ENCODE measurements at regions of chr2 and their contacts with region 1.

Region 1: DNA sequence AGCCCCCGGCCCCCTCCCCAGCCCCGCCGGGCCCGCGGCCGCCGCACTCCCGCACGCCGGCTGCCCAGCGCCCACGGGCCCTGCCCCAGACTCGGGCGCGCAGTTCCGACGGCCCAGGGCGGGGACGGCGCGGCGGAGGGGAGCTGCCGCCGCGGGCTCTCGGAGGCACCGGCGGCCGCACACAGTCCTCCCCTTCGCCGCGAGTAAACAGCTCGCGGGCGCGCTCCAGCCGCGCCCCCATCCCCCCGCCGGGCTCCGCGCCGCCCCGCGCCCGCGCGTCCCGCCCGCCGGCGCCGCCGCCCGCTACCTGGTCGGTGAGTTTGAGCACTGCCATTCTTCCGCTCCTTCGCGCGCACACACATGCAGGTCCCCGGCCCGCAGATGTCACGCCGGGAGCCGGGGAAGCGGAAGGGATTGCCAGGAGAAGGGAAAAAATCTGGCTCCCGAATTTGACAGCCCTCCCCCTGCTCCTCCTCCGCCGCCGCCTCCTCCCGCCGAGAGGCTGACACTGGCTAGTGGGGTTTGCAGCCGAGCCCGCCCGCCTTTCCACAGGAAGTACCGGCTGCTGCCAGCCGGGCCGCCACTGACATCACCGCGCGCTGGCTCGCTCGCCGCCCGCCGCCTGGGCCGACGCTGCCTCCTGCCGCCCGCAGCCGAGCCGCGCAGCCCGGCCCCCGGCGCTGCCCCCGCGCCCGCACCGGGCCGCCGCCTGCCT is at the start of gene ANKRD44:
- DNase-seq: peak; percentile 83 to 95 (median 88)
- ATAC-seq: peak; percentile 75 to 80
- H3K4me3 Mint-ChIP-seq: peak within 1 kb of the TSS; percentile 92 to 99 (median 96)
- H3K27ac Mint-ChIP-seq: peak within 1 kb of the TSS; percentile 93 to 98 (median 96)
- H3K4me1 Mint-ChIP-seq: peaks cover 34 to 67% (median 61%) of the 10 kb centered on the region in 4 donors
- H3K27me3 Mint-ChIP-seq: no peaks in the 10 kb centered on the region
- polyA plus RNA-seq, gene ANKRD44: 85.8 to 96.1 (median 94.2) TPM

Region 2: DNA sequence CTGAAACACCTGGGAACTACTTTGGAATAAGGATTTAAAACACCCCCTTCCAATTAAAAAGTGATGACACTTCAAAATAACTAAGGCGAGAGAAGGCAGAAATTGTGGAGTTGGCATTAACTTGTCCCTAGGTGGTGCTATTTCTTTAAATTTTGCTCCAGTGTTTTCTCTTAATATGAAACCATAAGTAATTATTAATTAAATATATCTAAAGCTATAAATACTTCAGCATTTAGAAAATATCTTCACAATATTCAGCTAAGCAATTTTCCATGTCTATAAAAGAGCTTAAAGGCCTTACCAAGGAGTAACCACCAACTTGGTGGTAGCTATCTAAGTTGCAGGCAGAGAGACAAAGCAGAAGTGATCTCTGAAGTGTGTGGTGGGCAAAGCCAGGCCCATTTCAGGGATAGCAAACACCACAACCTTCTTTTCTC is 197.1 kb before region 1 on chr2:
- POLR2A ChIA-PET with region 1: interaction called, 10 read pairs
- DNase-seq: peak in 3 of 10 donors; percentile 43 to 51 (median 50)
- ATAC-seq: peak; percentile 33 to 39
- H3K4me3 Mint-ChIP-seq: no peak overlapping the region
- H3K27ac Mint-ChIP-seq: peak overlapping the region in 9 of 10 donors; percentile 39 to 96 (median 80)
- H3K4me1 Mint-ChIP-seq: peaks cover 26 to 47% (median 40%) of the 10 kb centered on the region in 4 donors
- H3K27me3 Mint-ChIP-seq: no peaks in the 10 kb centered on the region

Region 3: DNA sequence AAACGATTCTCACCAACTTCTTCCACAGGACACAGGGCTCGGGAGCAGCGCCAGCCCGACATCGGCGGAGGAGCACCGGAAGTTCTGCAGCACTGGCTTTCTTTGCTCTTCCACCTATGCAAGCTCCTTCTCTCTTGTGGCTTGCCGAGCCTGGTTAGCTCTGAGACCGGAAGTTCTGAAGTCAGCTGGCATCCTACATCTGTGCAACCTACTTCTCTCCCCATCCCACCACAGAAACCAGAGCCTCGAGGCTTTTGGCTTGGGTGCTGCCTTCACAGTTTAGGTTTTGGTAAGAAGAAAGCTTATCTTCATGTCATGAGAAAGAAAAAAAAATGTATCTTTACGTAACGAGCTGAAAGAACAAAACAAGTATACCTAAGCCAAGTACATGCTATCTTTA is 111.5 kb before region 1 on chr2:
- POLR2A ChIA-PET with region 1: interaction called, 582 read pairs
- DNase-seq: peak; percentile 63 to 98 (median 93)
- ATAC-seq: peak; percentile 79 to 89
- H3K4me3 Mint-ChIP-seq: peak overlapping the region; percentile 86 to 98 (median 94)
- H3K27ac Mint-ChIP-seq: peak overlapping the region; percentile 96 to 100 (median 98)
- H3K4me1 Mint-ChIP-seq: peaks cover 42 to 96% (median 92%) of the 10 kb centered on the region in 4 donors
- H3K27me3 Mint-ChIP-seq: peaks cover 0 to 2% (median 0%) of the 10 kb centered on the region in 5 donors

Region 4: DNA sequence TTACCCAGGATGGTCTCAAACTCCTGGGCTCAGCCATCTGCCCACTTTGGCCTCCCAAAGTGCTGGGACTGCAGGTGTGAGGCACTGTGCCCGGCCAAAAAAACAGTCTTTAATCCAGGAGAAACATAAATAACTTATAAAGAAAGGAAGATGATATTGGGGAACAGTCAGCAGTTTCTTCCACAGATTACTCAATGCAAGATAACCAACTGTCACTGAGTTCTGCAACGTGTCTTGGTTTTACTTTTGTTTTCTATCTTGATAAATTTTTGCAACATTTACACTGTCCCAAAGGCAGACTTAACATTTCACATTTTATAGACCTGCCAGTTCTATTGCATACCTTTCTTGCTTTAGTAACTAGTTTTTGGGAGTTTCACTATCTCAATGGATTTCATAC is 71.0 kb before region 1 on chr2:
- POLR2A ChIA-PET with region 1: interaction called, 48 read pairs
- DNase-seq: peak in 1 of 10 donors; percentile 40
- ATAC-seq: peak in 1 of 2 donors; percentile 22
- H3K4me3 Mint-ChIP-seq: peak overlapping the region; percentile 73 to 90 (median 86)
- H3K27ac Mint-ChIP-seq: peak overlapping the region; percentile 77 to 100 (median 94)
- H3K4me1 Mint-ChIP-seq: peaks cover 49 to 96% (median 84%) of the 10 kb centered on the region in 4 donors
- H3K27me3 Mint-ChIP-seq: no peaks in the 10 kb centered on the region

Region 5: DNA sequence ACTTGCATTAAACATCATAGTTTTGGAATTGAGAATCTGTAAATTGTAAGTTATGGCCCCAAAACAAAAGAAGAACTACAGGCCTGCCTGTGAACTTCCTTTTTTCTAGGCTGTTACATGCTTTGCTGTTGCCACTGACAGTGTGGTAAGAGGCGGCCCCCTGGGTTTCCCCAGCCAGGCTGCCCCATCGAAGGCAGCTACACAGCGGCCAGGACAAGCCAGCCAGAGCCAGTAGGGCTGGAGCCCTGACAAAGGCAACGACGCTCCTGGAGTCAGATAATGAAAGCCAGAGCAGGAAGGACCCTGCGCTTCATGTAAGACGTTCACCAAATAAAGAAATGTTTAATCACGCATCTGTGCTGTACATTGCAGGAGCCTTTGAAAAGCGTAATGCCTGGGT is 54.9 kb before region 1 on chr2:
- POLR2A ChIA-PET with region 1: interaction called, 59 read pairs
- DNase-seq: peak; percentile 51 to 83 (median 68)
- ATAC-seq: peak; percentile 84 to 94
- H3K4me3 Mint-ChIP-seq: peak overlapping the region; percentile 70 to 86 (median 79)
- H3K27ac Mint-ChIP-seq: peak overlapping the region; percentile 90 to 100 (median 96)
- H3K4me1 Mint-ChIP-seq: peaks cover 37 to 85% (median 78%) of the 10 kb centered on the region in 4 donors
- H3K27me3 Mint-ChIP-seq: no peaks in the 10 kb centered on the region

Region 6: DNA sequence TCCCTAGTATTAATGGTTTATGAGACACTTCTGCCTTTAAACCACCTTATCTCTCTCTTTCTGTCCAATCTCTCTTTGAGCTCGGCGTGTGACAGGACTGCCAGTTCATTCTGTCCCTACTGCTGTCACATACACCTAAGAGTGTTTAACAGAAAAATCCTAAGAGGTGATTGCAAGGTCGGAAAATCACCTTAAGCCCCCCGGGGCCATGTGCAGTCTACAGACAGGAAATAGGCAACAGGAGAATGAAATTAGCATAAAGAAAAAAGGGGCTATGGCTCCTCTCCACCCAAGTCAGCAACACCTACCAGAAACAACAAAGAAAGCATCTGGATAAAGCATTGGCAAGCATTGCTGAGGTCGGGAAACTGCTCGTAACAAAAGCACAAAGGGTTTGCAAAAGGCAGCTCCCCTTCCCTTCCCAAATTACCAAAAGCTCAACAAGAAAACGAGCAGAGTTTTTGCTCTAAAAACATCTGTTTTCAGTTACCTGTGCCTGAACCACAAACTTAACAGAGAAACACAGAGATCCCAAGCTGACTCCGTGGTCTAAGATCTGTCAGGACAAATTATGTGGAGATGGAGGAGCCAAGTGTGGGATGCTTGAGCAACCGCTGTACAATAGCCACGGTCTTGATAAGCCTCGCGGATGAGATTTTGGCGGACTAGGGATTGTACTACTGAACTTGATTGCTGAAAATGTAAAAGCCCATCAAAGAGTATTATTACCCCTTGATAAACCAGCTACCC is 30.3 kb before region 1 on chr2:
- POLR2A ChIA-PET with region 1: interaction called, 18 read pairs
- DNase-seq: no peak
- ATAC-seq: peak; percentile 64 to 84
- H3K4me3 Mint-ChIP-seq: peak overlapping the region; percentile 57 to 85 (median 80)
- H3K27ac Mint-ChIP-seq: peak overlapping the region; percentile 90 to 96 (median 94)
- H3K4me1 Mint-ChIP-seq: peaks cover 51 to 91% (median 86%) of the 10 kb centered on the region in 4 donors
- H3K27me3 Mint-ChIP-seq: no peaks in the 10 kb centered on the region

Region 7: GRCh38 chr2:197293252-197294007 is 17.0 kb before region 1 on chr2:
- POLR2A ChIA-PET with region 1: interaction called, 129 read pairs
- DNase-seq: no peak
- ATAC-seq: peak; percentile 59 to 62
- H3K4me3 Mint-ChIP-seq: peak overlapping the region; percentile 67 to 94 (median 78)
- H3K27ac Mint-ChIP-seq: peak overlapping the region; percentile 93 to 98 (median 95)
- H3K4me1 Mint-ChIP-seq: peaks cover 54 to 97% (median 86%) of the 10 kb centered on the region in 4 donors
- H3K27me3 Mint-ChIP-seq: no peaks in the 10 kb centered on the region